ENCODE measurements at regions of chr5 and their contacts with region 1.

Region 1: GRCh38 chr5:141564216-141564692 is 54.5 kb downstream of the DIAPH1 start:
- DNase-seq: peak; percentile 85 to 89 (median 88)
- H3K4me3 ChIP-seq: no peak overlapping the region
- H3K4me3 Mint-ChIP-seq: peak overlapping the region in 1 of 8 donors; percentile 26
- H3K27ac ChIP-seq: peak overlapping the region; percentile 59
- H3K27ac Mint-ChIP-seq: peak overlapping the region; percentile 74 to 93 (median 85)
- H3K4me1 ChIP-seq: peaks cover 17% of the 10 kb centered on the region
- H3K4me1 Mint-ChIP-seq: peaks cover 22 to 48% (median 28%) of the 10 kb centered on the region in 4 donors
- H3K27me3 ChIP-seq: no peaks in the 10 kb centered on the region
- H3K27me3 Mint-ChIP-seq: no peaks in the 10 kb centered on the region

Region 2: GRCh38 chr5:141172378-141173204 is 391.7 kb before region 1 on chr5 and contains the start of gene PCDHB7:
- CTCF ChIA-PET with region 1: no interaction called
- POLR2A ChIA-PET with region 1: no interaction called
- intact Hi-C with region 1: loop called (anchors 1 kb)
- DNase-seq: peak in 2 of 5 donors; percentile 6 to 23
- H3K4me3 ChIP-seq: no peak within 1 kb of the TSS
- H3K4me3 Mint-ChIP-seq: peak within 1 kb of the TSS in 3 of 8 donors; percentile 14 to 35 (median 16)
- H3K27ac ChIP-seq: no peak within 1 kb of the TSS
- H3K27ac Mint-ChIP-seq: no peak within 1 kb of the TSS
- H3K4me1 ChIP-seq: no peaks in the 10 kb centered on the region
- H3K4me1 Mint-ChIP-seq: peaks cover 0 to 10% (median 3%) of the 10 kb centered on the region in 4 donors
- H3K27me3 ChIP-seq: no peaks in the 10 kb centered on the region
- H3K27me3 Mint-ChIP-seq: peaks cover 24 to 33% of the 10 kb centered on the region in 2 donors
- total RNA-seq, gene PCDHB7: not detected

Region 3: DNA sequence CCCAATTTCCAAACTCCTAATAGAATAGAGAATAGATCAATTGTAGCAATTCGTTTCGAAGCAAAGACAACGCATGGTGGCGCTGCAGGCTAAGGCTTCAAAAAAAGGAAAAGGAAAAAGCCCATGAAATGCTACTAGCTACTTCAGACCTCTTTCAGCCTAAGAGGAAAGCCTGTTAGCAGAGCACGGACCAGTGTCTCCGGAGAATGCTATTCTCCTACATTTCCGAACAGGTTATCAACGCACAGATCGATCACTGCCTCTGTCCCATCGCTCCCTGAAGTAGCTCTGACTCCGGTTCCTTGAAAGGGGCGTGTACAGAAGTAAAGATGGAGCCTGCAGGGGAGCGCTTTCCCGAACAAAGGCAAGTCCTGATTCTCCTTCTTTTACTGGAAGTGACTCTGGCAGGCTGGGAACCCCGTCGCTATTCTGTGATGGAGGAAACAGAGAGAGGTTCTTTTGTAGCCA is 319.0 kb before region 1 on chr5 and contains the start of gene PCDHB15:
- CTCF ChIA-PET with region 1: interaction called, 6 read pairs
- POLR2A ChIA-PET with region 1: no interaction called
- intact Hi-C with region 1: loop called (anchors 1 kb)
- DNase-seq: peak in 3 of 5 donors; percentile 5 to 18 (median 17)
- H3K4me3 ChIP-seq: no peak within 1 kb of the TSS
- H3K4me3 Mint-ChIP-seq: peak within 1 kb of the TSS in 7 of 8 donors; percentile 18 to 75 (median 64)
- H3K27ac ChIP-seq: no peak within 1 kb of the TSS
- H3K27ac Mint-ChIP-seq: no peak within 1 kb of the TSS
- H3K4me1 ChIP-seq: no peaks in the 10 kb centered on the region
- H3K4me1 Mint-ChIP-seq: peaks cover 0 to 4% (median 3%) of the 10 kb centered on the region in 4 donors
- H3K27me3 ChIP-seq: no peaks in the 10 kb centered on the region
- H3K27me3 Mint-ChIP-seq: peaks cover 13 to 17% of the 10 kb centered on the region in 2 donors
- total RNA-seq, gene PCDHB15: 0.17 to 0.53 TPM

Region 4: DNA sequence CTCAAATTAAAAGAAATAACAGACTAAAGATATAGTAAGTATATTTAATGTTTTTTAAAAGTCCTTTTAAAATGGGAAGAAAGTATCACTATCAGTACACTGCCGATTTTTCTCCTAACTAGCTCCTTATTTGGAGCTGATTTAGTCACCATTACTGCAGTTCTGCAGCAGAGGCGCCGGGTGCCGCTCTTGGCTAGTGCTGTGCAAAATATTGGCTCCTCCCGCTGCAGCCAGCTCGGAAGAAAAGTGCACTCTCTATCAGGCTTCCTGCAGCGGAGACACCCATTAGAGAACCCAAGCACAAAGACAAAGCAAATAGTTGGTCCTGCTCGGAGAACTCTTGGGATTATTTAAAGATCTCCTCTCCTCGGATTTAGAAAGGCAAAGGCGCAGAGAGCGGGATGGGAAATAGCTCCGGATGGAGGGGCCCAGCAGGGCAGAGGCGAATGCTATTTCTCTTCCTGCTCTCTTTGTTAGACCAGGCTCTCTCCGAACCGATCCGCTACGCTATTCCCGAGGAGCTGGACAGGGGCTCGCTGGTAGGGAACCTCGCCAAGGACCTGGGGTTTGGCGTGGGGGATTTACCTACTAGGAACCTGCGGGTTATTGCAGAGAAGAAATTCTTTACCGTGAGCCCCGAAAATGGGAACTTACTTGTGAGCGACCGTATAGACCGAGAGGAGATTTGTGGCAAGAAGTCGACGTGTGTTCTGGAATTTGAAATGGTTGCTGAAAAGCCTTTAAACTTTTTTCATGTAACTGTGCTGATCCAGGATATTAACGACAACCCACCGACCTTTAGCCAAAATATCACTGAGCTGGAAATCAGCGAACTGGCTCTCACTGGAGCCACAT is 194.0 kb before region 1 on chr5 and contains the start of gene PCDHGB3:
- CTCF ChIA-PET with region 1: interaction called, 14 read pairs
- POLR2A ChIA-PET with region 1: interaction called, 4 read pairs
- intact Hi-C with region 1: loop called (anchors 1 kb)
- DNase-seq: peak in 4 of 5 donors; percentile 30 to 49 (median 37)
- H3K4me3 ChIP-seq: peak within 1 kb of the TSS in 1 of 2 donors; percentile 15
- H3K4me3 Mint-ChIP-seq: peak within 1 kb of the TSS; percentile 69 to 89 (median 83)
- H3K27ac ChIP-seq: no peak within 1 kb of the TSS
- H3K27ac Mint-ChIP-seq: peak within 1 kb of the TSS in 1 of 7 donors; percentile 68
- H3K4me1 ChIP-seq: peaks cover 6% of the 10 kb centered on the region
- H3K4me1 Mint-ChIP-seq: peaks cover 4 to 11% (median 8%) of the 10 kb centered on the region in 4 donors
- H3K27me3 ChIP-seq: peaks cover 20% of the 10 kb centered on the region
- H3K27me3 Mint-ChIP-seq: peaks cover 43 to 46% of the 10 kb centered on the region in 2 donors
- total RNA-seq, gene PCDHGB3: 0.50 to 0.76 TPM

Region 5: GRCh38 chr5:141524604-141525597 is 39.4 kb before region 1 on chr5:
- CTCF ChIA-PET with region 1: interaction called, 22 read pairs
- POLR2A ChIA-PET with region 1: no interaction called
- intact Hi-C with region 1: no loop called
- DNase-seq: peak; percentile 46 to 62 (median 51)
- H3K4me3 ChIP-seq: no peak overlapping the region
- H3K4me3 Mint-ChIP-seq: no peak overlapping the region
- H3K27ac ChIP-seq: no peak overlapping the region
- H3K27ac Mint-ChIP-seq: peak overlapping the region in 5 of 7 donors; percentile 26 to 72 (median 57)
- H3K4me1 ChIP-seq: peaks cover 15% of the 10 kb centered on the region
- H3K4me1 Mint-ChIP-seq: peaks cover 11 to 28% (median 21%) of the 10 kb centered on the region in 4 donors
- H3K27me3 ChIP-seq: no peaks in the 10 kb centered on the region
- H3K27me3 Mint-ChIP-seq: no peaks in the 10 kb centered on the region

Region 6: GRCh38 chr5:141618804-141619554 is 54.7 kb after region 1 on chr5 and contains the start of gene DIAPH1:
- CTCF ChIA-PET with region 1: interaction called, 13 read pairs
- POLR2A ChIA-PET with region 1: interaction called, 16 read pairs
- intact Hi-C with region 1: no loop called
- DNase-seq: peak; percentile 96 to 98 (median 97)
- H3K4me3 ChIP-seq: peak within 1 kb of the TSS; percentile 86 to 95
- H3K4me3 Mint-ChIP-seq: peak within 1 kb of the TSS; percentile 94 to 100 (median 98)
- H3K27ac ChIP-seq: peak within 1 kb of the TSS; percentile 86
- H3K27ac Mint-ChIP-seq: peak within 1 kb of the TSS; percentile 93 to 99 (median 98)
- H3K4me1 ChIP-seq: peaks cover 45% of the 10 kb centered on the region
- H3K4me1 Mint-ChIP-seq: peaks cover 33 to 57% (median 44%) of the 10 kb centered on the region in 4 donors
- H3K27me3 ChIP-seq: no peaks in the 10 kb centered on the region
- H3K27me3 Mint-ChIP-seq: no peaks in the 10 kb centered on the region
- total RNA-seq, gene DIAPH1: 211 TPM